ENCODE measurements at regions of chr4 and their contacts with region 1.

Region 1: DNA sequence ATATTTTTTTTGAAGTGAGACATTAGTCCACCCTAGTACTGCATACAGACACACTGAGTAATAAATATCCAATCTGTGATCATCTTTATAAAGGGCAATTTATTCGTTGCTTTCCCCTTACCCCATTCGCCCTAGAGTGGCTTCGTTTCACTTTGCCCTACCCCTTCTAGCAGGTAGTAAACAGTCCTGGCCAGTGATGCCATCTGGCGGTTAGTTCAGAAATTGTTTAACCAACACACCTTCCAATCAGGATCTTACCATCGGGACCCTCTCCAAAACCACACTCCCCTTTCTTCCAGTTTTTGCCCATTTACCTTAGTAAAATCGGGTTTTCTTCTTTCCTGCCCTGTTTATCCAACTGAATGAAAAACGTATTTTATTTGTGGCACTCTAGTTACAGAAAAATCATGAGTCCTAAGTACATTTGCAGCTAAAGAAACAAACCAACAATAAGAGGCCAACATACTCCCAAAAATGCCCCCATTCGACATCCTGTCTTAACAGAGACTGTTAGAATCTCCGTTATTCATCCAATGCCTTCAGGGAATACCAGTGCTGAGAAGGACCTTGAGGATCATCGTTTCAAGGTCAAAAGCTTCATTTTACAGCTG is 2.2 kb downstream of the PPA2 start:
- DNase-seq: peak; percentile 51 to 88
- ATAC-seq: peak; percentile 44 to 56 (median 45)
- H3K4me3 ChIP-seq: no peak overlapping the region
- H3K4me3 Mint-ChIP-seq: peak overlapping the region; percentile 54
- H3K27ac ChIP-seq: no peak overlapping the region
- H3K27ac Mint-ChIP-seq: peak overlapping the region; percentile 78 to 96
- H3K4me1 ChIP-seq: peaks cover 14% of the 10 kb centered on the region
- H3K4me1 Mint-ChIP-seq: peaks cover 43 to 53% of the 10 kb centered on the region in 2 donors
- H3K27me3 ChIP-seq: no peaks in the 10 kb centered on the region
- H3K27me3 Mint-ChIP-seq: no peaks in the 10 kb centered on the region
- CTCF ChIP-seq: peak; percentile 75

Region 2: DNA sequence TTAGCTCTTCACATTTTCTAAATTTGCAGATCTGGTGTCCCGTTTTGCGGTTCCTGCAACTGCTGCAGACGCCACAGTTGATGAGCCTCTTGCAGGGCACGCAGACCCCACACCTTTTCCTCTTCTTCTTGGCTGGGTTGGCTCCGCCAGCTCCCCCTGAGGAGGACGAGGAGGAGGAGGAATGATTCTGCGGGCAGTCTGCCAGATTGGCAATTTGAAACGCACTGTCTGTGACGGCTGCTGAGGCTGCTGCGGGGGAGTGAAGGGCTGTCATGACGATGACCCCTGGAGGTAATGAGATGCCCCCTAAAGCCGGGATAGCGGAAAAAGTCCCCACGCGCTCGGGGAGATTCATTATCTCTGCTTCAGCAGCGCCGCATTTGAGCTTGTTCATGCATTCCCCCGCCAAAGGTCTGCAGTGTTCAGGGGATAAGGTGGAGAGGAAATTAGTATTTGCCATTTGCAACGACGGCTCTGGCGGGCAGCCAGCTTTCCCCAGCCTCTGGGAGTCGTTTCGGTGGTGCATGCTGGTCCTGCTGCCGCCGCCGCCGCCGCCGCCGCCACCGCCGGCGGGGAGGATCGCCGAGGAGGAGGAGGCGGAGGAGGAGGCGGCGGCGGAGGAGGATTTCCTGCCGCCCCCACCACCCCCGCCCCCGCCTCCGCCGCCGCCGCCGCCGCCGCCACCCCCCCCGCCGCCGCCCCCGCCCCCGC is 980.7 kb before region 1 on chr4:
- intact Hi-C with region 1: loop called (anchors 5 kb)
- DNase-seq: peak; percentile 45 to 64
- ATAC-seq: peak in 2 of 3 donors; percentile 63 to 70
- H3K4me3 ChIP-seq: peak overlapping the region; percentile 59
- H3K4me3 Mint-ChIP-seq: peak overlapping the region; percentile 90
- H3K27ac ChIP-seq: no peak overlapping the region
- H3K27ac Mint-ChIP-seq: peak overlapping the region in 1 of 2 donors; percentile 78
- H3K4me1 ChIP-seq: peaks cover 24% of the 10 kb centered on the region
- H3K4me1 Mint-ChIP-seq: peaks cover 41 to 48% of the 10 kb centered on the region in 2 donors
- H3K27me3 ChIP-seq: peaks cover 14% of the 10 kb centered on the region
- H3K27me3 Mint-ChIP-seq: peaks cover 28 to 41% of the 10 kb centered on the region in 2 donors
- CTCF ChIP-seq: no peak

Region 3: DNA sequence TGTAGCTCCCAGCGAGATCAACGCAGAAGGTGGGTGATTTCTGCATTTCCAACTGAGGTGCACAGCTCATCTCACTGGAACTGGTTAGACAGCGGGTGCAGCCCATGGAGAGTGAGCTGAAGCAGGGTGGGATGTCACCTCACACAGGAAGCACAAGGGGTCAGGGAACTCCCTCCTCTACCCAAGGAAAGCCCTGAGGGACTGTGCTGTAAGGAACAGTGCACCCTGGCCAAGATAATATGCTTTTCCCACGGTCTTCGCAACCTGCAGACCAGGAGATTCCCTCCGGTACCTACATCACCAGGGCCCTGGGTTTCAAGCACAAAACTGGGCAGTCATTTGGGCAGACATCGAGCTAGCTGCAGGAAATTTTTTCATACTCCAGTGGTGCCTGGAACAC is 541.4 kb before region 1 on chr4:
- intact Hi-C with region 1: loop called (anchors 10 kb)
- DNase-seq: peak in 1 of 2 donors; percentile 8
- ATAC-seq: peak; percentile 50 to 64 (median 52)
- H3K4me3 ChIP-seq: no peak overlapping the region
- H3K4me3 Mint-ChIP-seq: peak overlapping the region; percentile 81
- H3K27ac ChIP-seq: peak overlapping the region; percentile 81
- H3K27ac Mint-ChIP-seq: peak overlapping the region; percentile 89 to 92
- H3K4me1 ChIP-seq: peaks cover 18% of the 10 kb centered on the region
- H3K4me1 Mint-ChIP-seq: peaks cover 48 to 60% of the 10 kb centered on the region in 2 donors
- H3K27me3 ChIP-seq: no peaks in the 10 kb centered on the region
- H3K27me3 Mint-ChIP-seq: no peaks in the 10 kb centered on the region
- CTCF ChIP-seq: no peak

Region 4: DNA sequence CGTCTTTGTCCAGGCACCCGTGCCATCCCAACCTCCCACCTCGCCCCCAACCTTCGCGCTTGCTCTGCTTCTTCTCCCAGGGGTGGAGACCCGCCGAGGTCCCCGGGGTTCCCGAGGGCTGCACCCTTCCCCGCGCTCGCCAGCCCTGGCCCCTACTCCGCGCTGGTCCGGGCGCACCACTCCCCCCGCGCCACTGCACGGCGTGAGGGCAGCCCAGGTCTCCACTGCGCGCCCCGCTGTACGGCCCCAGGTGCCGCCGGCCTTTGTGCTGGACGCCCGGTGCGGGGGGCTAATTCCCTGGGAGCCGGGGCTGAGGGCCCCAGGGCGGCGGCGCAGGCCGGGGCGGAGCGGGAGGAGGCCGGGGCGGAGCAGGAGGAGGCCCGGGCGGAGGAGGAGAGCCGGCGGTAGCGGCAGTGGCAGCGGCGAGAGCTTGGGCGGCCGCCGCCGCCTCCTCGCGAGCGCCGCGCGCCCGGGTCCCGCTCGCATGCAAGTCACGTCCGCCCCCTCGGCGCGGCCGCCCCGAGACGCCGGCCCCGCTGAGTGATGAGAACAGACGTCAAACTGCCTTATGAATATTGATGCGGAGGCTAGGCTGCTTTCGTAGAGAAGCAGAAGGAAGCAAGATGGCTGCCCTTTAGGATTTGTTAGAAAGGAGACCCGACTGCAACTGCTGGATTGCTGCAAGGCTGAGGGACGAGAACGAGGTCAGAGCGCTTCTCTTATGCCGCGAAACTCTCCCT is 325.2 kb before region 1 on chr4 and contains the start of gene TET2:
- intact Hi-C with region 1: loop called (anchors 1 kb)
- DNase-seq: peak; percentile 72 to 90
- ATAC-seq: peak; percentile 87 to 95 (median 92)
- H3K4me3 ChIP-seq: peak within 1 kb of the TSS; percentile 67
- H3K4me3 Mint-ChIP-seq: peak within 1 kb of the TSS; percentile 97
- H3K27ac ChIP-seq: peak within 1 kb of the TSS; percentile 84
- H3K27ac Mint-ChIP-seq: peak within 1 kb of the TSS; percentile 96 to 99
- H3K4me1 ChIP-seq: peaks cover 4% of the 10 kb centered on the region
- H3K4me1 Mint-ChIP-seq: peaks cover 54 to 56% of the 10 kb centered on the region in 2 donors
- H3K27me3 ChIP-seq: no peaks in the 10 kb centered on the region
- H3K27me3 Mint-ChIP-seq: no peaks in the 10 kb centered on the region
- CTCF ChIP-seq: no peak
- total RNA-seq, gene TET2: 80.0 to 91.6 (median 82.8) TPM

Region 5: DNA sequence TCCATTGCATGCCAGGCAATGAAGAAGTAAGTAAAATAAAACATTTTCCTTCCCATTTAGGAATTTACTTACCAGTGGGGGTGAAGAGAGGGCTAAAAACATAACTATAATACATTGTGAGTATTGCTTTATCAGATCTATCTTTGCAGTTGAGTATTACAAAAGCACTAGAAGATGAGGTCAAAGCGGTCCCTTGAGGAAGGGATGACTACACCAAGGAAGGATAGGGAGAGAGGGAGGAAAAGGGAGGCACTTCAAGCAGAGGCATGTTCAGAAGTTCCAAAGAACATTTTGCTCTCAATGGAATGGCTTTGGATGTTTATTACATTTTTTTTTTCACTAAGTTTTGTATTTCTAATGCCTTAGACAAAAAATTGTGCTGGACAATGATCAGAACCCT is 197.2 kb before region 1 on chr4:
- intact Hi-C with region 1: loop called (anchors 10 kb)
- DNase-seq: no peak
- ATAC-seq: no peak
- H3K4me3 ChIP-seq: no peak overlapping the region
- H3K4me3 Mint-ChIP-seq: no peak overlapping the region
- H3K27ac ChIP-seq: no peak overlapping the region
- H3K27ac Mint-ChIP-seq: peak overlapping the region; percentile 91 to 93
- H3K4me1 ChIP-seq: peaks cover 12% of the 10 kb centered on the region
- H3K4me1 Mint-ChIP-seq: peaks cover 71 to 78% of the 10 kb centered on the region in 2 donors
- H3K27me3 ChIP-seq: no peaks in the 10 kb centered on the region
- H3K27me3 Mint-ChIP-seq: no peaks in the 10 kb centered on the region
- CTCF ChIP-seq: no peak